Aorta (tissue), 5 donors: ENCODE measurements at regions of chr4 and their contacts with region 1.

Region 1: DNA sequence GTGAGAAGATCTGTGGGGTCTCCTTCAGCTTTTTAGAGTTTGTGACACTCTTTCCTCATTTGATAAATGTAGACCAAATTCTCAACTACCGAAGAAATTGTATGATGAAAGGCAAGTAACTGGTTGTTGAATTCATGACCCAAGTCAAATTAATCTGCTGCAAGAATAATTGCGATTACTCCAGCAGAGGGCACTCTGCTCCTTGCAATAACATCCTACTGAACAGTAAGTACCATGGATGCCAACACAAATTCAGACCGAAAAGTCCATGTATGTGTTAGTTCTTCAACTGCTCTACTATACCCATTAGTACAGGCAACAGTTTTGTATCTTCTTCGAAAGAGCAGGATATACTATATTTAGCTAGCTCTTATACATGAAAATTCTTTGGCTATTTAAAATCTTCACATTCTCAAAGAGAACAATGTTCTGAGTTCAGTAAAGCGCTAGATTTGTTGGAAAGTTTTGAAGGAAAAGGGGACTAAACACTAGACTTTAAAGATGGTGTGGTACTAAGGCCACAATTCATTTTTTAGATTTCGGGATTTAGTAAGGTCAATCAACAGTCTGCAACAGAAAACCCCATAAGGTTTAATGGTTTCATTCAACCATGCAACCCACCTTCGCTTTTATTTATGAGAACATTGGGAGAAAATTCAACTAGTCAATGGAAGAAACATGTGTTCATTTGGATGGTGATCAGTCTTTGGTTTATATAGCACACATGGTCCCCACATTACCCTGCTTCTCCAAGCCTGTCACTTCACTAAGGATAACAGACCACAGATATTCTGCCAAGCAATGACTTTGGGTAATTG is 105.4 kb upstream of the TBC1D9 start:
- DNase-seq: peak in 1 of 2 donors; percentile 56
- ATAC-seq: peak; percentile 86
- H3K4me3 ChIP-seq: no peak overlapping the region
- H3K27ac ChIP-seq: no peak overlapping the region
- H3K4me1 ChIP-seq: peaks cover 0 to 1% of the 10 kb centered on the region in 2 donors
- H3K27me3 ChIP-seq: no peaks in the 10 kb centered on the region

Region 2: GRCh38 chr4:140903522-140904475 is 42.2 kb after region 1 on chr4:
- intact Hi-C with region 1: no loop called
- DNase-seq: no peak
- ATAC-seq: no peak
- H3K4me3 ChIP-seq: no peak overlapping the region
- H3K27ac ChIP-seq: no peak overlapping the region
- H3K4me1 ChIP-seq: no peaks in the 10 kb centered on the region
- H3K27me3 ChIP-seq: no peaks in the 10 kb centered on the region

Region 3: GRCh38 chr4:140928880-140929279 is 67.3 kb after region 1 on chr4:
- intact Hi-C with region 1: loop called in 1 of 2 experiments (anchors 10 kb)
- DNase-seq: peak in 1 of 2 donors; percentile 76
- ATAC-seq: peak; percentile 70
- H3K4me3 ChIP-seq: no peak overlapping the region
- H3K27ac ChIP-seq: no peak overlapping the region
- H3K4me1 ChIP-seq: peaks cover 0 to 4% of the 10 kb centered on the region in 2 donors
- H3K27me3 ChIP-seq: no peaks in the 10 kb centered on the region

Region 4: DNA sequence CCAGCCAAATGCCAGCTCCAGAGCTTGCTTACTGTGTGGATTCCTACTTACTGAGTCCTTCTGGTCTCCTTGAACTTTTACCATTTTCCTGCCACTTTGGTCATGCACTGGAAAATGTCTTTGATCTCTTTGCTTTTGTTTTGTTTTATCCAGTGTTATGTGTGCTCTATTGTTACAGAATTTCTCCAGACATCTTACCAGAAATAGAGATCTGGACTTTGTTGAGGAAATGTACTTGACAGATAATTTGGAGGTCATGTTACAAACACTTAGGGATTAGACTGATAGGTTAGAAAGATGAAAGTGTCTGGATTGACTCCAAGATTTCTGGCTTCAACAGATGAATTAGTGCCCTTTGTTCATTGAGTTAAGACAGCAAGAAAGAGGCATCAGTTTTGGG is 353.5 kb after region 1 on chr4:
- intact Hi-C with region 1: loop called in 1 of 2 experiments (anchors 10 kb)
- DNase-seq: no peak
- ATAC-seq: no peak
- H3K4me3 ChIP-seq: no peak overlapping the region
- H3K27ac ChIP-seq: no peak overlapping the region
- H3K4me1 ChIP-seq: no peaks in the 10 kb centered on the region
- H3K27me3 ChIP-seq: no peaks in the 10 kb centered on the region

Region 5: DNA sequence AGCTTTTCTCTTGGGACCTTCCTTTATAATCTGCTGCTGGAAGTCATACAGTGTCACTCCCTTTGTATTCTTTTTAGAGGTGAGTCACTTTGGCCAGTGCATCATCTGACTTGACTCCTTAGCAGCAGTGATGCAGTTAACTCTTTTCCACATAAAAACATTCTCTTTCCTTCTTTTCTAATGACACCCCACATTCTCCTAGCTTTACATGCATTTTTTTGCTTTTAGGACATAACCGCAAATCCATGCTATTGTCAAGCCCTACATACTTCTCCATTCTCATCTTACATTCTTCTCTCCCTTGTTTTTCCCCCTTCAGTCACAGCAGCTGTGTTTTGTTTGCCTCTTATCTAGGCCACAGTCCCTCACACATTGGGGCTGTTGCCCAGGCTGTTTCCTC is 414.3 kb after region 1 on chr4:
- intact Hi-C with region 1: no loop called
- DNase-seq: no peak
- ATAC-seq: no peak
- H3K4me3 ChIP-seq: no peak overlapping the region
- H3K27ac ChIP-seq: no peak overlapping the region
- H3K4me1 ChIP-seq: no peaks in the 10 kb centered on the region
- H3K27me3 ChIP-seq: no peaks in the 10 kb centered on the region